CD4-positive, alpha-beta T cell (primary cell): ENCODE measurements at regions of chr15 and their contacts with region 1.

Region 1: GRCh38 chr15:34038023-34038870 is 757 bp downstream of the AVEN start:
- DNase-seq: peak; percentile 51 to 91 (median 68)
- ATAC-seq: peak; percentile 81
- H3K4me3 ChIP-seq: peak overlapping the region; percentile 76
- H3K4me3 Mint-ChIP-seq: peak overlapping the region; percentile 91
- H3K27ac ChIP-seq: peak overlapping the region; percentile 55 to 57
- H3K27ac Mint-ChIP-seq: peak overlapping the region; percentile 90
- H3K4me1 ChIP-seq: peaks cover 7% of the 10 kb centered on the region
- H3K4me1 Mint-ChIP-seq: peaks cover 20% of the 10 kb centered on the region
- H3K27me3 ChIP-seq: no peaks in the 10 kb centered on the region
- H3K27me3 Mint-ChIP-seq: no peaks in the 10 kb centered on the region
- CTCF ChIP-seq: no peak

Region 2: DNA sequence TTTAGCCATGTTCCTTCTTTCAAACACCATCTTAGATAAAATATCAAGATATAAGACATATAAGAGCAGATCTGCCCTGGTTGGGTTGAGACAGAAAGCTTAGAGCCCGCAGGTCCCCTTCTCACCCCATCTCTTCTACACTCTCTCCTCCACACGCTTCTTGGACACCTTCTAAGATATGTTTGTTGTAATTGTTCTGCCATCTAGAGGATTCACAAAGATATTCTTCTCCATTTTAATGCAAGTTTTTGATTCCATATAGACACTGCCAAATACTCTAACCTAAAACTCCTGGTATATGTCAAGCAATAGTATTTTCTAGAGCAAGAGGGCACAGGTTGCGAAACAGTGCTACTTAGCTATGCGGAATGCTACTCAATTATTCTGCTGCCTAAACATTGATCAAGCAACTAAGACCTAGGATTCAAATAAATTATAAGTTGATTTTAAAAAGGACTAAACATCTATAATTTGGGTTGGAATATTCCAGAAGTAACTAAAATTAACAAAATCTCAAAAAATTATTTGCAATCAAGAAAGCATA is 63.2 kb before region 1 on chr15:
- CTCF ChIA-PET with region 1: no interaction called
- POLR2A ChIA-PET with region 1: no interaction called
- intact Hi-C with region 1: loop called in 1 of 2 experiments (anchors 10 kb)
- DNase-seq: no peak
- ATAC-seq: no peak
- H3K4me3 ChIP-seq: no peak overlapping the region
- H3K4me3 Mint-ChIP-seq: no peak overlapping the region
- H3K27ac ChIP-seq: no peak overlapping the region
- H3K27ac Mint-ChIP-seq: no peak overlapping the region
- H3K4me1 ChIP-seq: no peaks in the 10 kb centered on the region
- H3K4me1 Mint-ChIP-seq: no peaks in the 10 kb centered on the region
- H3K27me3 ChIP-seq: no peaks in the 10 kb centered on the region
- H3K27me3 Mint-ChIP-seq: no peaks in the 10 kb centered on the region
- CTCF ChIP-seq: no peak

Region 3: DNA sequence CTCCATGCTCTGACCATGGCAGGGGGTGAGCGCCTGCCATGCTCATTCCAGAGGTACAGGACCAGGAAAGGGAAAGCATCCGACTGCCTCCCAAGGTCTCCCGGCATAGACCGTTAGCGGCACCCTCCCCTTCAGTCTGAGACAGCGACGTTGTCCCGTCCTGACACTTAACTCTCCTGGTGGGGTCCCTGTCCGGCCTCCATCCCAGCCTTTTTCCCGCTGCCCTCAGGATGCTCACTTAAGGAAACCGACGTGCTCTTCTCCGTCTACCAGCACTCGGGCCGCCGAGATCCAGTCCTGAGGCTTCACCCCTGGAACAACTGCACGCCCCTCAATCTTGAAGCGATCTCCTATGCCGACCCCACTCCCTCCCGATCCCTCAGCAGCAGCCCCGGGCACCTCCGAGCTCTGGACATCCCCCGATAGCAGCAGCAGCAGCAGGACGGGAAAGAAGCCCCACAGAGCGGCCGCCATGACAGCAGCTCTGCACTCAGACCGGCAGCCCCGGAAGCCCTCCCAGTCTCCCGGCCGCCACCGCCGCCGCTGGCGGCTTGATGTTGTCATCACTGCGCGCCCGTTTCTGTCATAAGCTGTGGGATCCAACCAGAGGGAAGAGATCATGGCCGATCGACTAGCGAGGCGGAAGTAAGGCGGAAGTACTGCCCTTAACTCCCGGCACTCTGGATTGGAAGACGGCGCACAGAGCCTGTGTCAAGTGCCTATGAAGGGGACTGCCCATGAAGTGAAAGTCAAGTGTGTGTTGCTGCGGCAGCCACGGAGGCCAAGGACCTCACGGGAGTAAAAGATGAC is 63.3 kb after region 1 on chr15 and contains the starts of genes EMC7 and PGBD4:
- CTCF ChIA-PET with region 1: interaction called, 3 read pairs
- POLR2A ChIA-PET with region 1: interaction called, 32 read pairs
- intact Hi-C with region 1: loop called (anchors 2 to 5 kb)
- DNase-seq: peak; percentile 97 to 100 (median 99)
- ATAC-seq: peak; percentile 96
- H3K4me3 ChIP-seq: peak within 1 kb of the TSS; percentile 80
- H3K4me3 Mint-ChIP-seq: peak within 1 kb of the TSS; percentile 91
- H3K27ac ChIP-seq: peak within 1 kb of the TSS; percentile 86 to 97
- H3K27ac Mint-ChIP-seq: peak within 1 kb of the TSS; percentile 96
- H3K4me1 ChIP-seq: peaks cover 20% of the 10 kb centered on the region
- H3K4me1 Mint-ChIP-seq: peaks cover 54% of the 10 kb centered on the region
- H3K27me3 ChIP-seq: no peaks in the 10 kb centered on the region
- H3K27me3 Mint-ChIP-seq: no peaks in the 10 kb centered on the region
- CTCF ChIP-seq: no peak
- total RNA-seq, gene EMC7: 54.0 to 54.6 TPM
- total RNA-seq, gene PGBD4: 2.3 to 2.6 TPM